Thyroid gland (tissue), 4 donors: ENCODE measurements at regions of chr12 and their contacts with region 1.

Region 1: DNA sequence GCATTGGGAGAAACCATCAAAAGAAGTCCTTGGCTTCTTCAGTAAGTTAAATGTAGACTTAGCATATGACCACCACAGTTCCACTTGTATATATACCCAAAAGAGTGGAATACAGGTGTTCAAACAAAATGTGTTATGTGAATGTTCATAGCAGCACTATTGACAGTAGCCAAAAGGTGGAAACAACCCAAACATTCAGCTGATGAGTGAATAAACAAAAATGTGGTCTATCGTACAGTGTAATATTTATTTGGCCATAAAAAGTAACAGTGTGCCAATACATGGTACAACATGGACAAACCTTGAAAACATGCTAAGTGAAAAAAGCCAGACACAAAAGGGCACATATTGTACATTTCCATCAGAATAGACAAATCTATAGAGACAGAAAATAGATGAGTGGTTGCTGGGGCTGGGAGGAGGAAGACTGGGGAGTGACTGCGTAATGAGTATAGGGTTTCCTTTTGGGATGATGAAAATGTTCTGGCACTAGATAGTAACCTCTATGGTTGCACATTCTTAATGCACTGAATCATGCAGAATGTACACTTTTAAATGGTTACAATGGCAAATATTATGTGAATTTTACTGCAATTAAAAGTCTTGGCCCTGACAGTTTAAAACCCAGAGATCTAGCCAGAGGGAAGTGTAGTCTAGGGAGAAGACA is 5.5 kb downstream of the ERP29 start:
- DNase-seq: no peak
- H3K4me3 ChIP-seq: no peak overlapping the region
- H3K27ac ChIP-seq: no peak overlapping the region
- H3K4me1 ChIP-seq: peaks cover 9 to 19% of the 10 kb centered on the region in 2 donors
- H3K27me3 ChIP-seq: no peaks in the 10 kb centered on the region
- CTCF ChIP-seq: no peak
- POLR2A ChIP-seq: no peak

Region 2: GRCh38 chr12:111942557-111942956 is 76.1 kb before region 1 on chr12:
- intact Hi-C with region 1: loop called (anchors 5 kb)
- DNase-seq: no peak
- H3K4me3 ChIP-seq: no peak overlapping the region
- H3K27ac ChIP-seq: no peak overlapping the region
- H3K4me1 ChIP-seq: no peaks in the 10 kb centered on the region
- H3K27me3 ChIP-seq: no peaks in the 10 kb centered on the region
- CTCF ChIP-seq: no peak
- POLR2A ChIP-seq: no peak

Region 3: GRCh38 chr12:112066566-112066965 is 47.9 kb after region 1 on chr12:
- intact Hi-C with region 1: no loop called
- DNase-seq: no peak
- H3K4me3 ChIP-seq: no peak overlapping the region
- H3K27ac ChIP-seq: no peak overlapping the region
- H3K4me1 ChIP-seq: no peaks in the 10 kb centered on the region
- H3K27me3 ChIP-seq: no peaks in the 10 kb centered on the region
- CTCF ChIP-seq: no peak
- POLR2A ChIP-seq: no peak

Region 4: DNA sequence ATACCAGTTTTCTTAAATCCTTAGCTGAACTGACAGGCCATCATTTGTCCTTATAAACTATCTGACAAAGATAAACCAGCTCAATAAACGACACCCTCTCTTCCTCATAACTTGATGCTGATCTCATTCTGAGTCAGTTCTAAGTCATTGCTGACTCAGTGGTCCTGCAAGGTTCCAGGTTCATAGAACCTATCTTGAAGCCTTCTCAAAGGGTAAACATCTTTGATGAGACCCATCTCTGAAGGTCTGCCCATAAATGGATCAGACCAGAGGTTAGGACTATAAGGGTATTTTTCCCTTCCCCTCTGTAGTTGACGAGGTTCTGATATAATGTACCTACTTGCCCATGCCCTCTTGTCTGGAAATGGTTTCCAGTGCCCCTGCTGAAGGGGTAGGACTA is 78.0 kb after region 1 on chr12:
- intact Hi-C with region 1: no loop called
- DNase-seq: no peak
- H3K4me3 ChIP-seq: no peak overlapping the region
- H3K27ac ChIP-seq: no peak overlapping the region
- H3K4me1 ChIP-seq: no peaks in the 10 kb centered on the region
- H3K27me3 ChIP-seq: no peaks in the 10 kb centered on the region
- CTCF ChIP-seq: no peak
- POLR2A ChIP-seq: no peak

Region 5: DNA sequence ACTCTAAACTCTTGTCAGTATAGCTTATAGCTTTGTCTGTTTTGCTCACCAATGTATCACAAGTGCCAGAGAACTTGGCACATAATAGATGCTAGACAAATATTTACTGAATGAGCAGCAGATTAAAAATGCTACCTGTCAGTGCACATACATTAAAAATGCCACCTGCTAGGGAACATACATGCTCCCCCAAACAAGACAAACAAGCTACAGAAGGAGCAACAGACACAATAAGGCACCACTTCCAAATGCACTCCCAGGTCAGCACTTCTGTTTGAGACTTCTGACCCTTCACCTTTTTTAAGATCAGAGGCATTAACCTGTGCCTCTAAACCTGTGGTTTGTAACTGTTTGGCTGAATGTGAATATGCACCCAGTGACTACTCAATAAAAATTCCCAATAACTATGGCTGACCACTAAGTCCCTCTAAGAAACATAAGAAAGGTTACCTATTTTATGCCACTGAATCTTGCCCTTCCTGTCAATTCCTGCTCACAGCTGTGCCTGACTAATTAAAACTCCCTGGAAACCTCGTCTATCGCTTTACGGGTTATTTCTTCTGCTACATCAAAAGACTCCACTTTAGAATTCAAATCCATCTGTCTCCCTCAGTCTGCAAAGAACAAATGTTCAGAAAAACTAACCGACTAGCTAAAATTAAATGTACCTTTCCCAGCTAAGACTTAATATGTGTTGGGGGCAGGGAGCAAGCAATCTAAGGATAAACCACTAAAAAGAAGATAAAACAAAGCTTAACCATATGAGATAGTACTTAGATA is 322.5 kb after region 1 on chr12:
- intact Hi-C with region 1: no loop called
- DNase-seq: no peak
- H3K4me3 ChIP-seq: no peak overlapping the region
- H3K27ac ChIP-seq: no peak overlapping the region
- H3K4me1 ChIP-seq: peaks cover 0 to 9% of the 10 kb centered on the region in 2 donors
- H3K27me3 ChIP-seq: no peaks in the 10 kb centered on the region
- CTCF ChIP-seq: no peak
- POLR2A ChIP-seq: no peak